Heart right ventricle (tissue), 16 donors: ENCODE measurements at regions of chrX and their contacts with region 1.

Region 1: DNA sequence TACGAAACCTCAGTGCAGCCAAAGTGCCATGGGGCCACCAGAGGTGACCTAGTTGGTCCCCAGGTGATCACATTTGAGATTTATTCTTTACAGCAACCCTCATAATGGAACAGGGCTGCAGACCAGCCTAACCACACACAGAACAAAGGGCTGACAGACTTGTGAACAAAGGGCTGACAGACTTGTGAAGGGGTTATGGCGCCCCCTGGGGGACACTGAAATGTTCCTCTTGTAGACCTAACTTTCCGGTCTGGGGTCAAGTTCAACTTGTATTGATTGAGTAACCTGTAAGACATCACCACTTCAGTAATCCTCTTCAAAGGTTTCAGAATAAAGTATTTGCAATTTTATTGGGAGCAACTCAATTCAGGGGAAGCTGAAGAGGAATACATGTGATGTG is 175.9 kb upstream of the RPS6KA3 start:
- DNase-seq: peak; percentile 63 to 75
- ATAC-seq: peak; percentile 56 to 83 (median 75)
- H3K4me3 ChIP-seq: no peak overlapping the region
- H3K27ac ChIP-seq: no peak overlapping the region
- H3K4me1 ChIP-seq: peaks cover 0 to 6% (median 0%) of the 10 kb centered on the region in 9 donors
- H3K27me3 ChIP-seq: peaks cover 0 to 8% (median 0%) of the 10 kb centered on the region in 7 donors
- CTCF ChIP-seq: peak; percentile 14 to 70 (median 66)

Region 2: DNA sequence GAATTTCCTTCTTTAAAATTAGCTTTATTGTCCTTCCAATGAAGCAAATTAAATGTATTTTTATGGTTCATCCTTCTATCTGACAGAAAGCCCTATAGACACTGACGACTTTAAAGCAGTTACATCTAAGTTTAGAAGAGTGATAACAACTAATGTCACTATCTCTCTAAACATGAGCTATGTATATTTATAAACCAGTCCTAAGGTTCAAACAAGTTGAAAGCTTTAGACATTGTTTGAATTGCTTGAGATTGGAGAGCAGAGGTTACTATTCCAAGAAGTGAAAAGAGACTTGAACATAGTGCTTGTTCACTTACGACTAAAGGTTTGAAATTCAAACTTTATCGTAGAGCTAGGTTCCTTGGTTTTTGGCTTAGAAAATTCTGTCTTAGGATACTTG is 270.7 kb before region 1 on chrX:
- intact Hi-C with region 1: loop called in 1 of 10 experiments (anchors 10 kb)
- DNase-seq: no peak
- ATAC-seq: peak in 1 of 8 donors; percentile 62
- H3K4me3 ChIP-seq: no peak overlapping the region
- H3K27ac ChIP-seq: peak overlapping the region in 4 of 10 donors; percentile 10 to 58 (median 28)
- H3K4me1 ChIP-seq: peaks cover 0 to 4% (median 0%) of the 10 kb centered on the region in 9 donors
- H3K27me3 ChIP-seq: peaks cover 0 to 62% (median 0%) of the 10 kb centered on the region in 7 donors
- CTCF ChIP-seq: no peak

Region 3: DNA sequence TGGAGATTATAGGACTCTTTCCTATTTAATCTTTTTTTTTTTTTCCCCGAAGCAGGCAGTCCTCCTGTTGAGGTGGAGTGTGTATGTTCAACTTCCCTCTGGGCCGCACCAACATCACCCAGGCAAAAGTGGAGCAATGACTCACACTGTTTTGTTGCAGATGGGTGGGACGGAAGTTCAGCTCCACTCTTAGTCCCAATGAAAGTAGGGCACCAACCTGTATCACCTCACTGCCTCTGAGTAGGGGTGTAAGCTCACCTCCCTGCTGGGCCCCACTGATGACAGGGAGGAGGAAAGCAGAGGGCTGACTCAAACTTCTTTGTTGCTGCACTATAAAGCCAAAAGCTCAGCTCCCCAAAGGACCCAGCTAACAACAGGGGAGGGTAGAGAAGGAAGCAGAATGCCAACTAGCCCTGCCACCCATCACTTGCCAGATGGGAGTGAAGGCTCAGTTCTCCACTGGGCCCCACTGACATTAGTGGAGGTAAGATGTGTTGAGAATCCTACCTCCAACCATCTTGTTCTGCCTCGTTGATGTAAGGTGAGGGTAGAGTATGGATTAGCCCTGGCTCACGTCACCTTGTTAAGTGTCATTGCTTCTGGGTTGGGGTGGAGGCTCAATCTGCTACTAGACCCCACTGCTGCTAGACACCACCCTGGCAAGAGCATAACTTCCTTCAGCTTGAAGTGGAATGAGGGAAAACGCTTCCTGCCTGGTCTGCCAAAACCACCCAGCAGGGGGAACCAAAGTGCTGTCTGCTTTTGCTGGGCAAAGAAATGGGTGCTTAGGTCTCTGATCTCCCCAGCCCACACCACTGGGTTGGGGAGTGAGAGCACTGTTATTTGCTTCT is 190.0 kb before region 1 on chrX:
- intact Hi-C with region 1: loop called in 8 of 10 experiments (anchors 2 to 10 kb)
- DNase-seq: peak; percentile 30 to 47
- ATAC-seq: peak in 6 of 8 donors; percentile 29 to 71 (median 48)
- H3K4me3 ChIP-seq: no peak overlapping the region
- H3K27ac ChIP-seq: no peak overlapping the region
- H3K4me1 ChIP-seq: peaks cover 0 to 15% (median 0%) of the 10 kb centered on the region in 9 donors
- H3K27me3 ChIP-seq: no peaks in the 10 kb centered on the region
- CTCF ChIP-seq: peak in 8 of 9 donors; percentile 23 to 68 (median 52)

Region 4: DNA sequence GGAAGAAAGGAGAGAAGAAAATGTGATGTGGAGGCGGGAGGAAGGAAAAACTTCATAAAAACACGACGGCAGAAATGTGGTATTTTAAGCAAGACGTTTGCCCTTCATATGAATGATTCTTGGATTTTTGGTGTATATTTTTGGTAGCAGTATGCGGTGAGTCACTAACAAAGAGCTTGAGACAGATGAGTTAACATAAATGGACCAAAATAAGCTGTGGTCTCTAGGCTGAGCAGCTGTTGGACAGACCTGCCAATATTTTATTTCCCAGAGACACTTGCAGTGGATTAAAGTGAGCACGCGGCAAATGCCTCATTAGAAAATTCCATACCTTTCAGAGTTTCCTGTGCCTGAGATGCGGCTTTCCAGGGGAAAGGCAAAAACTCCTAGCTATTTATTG is 132.8 kb before region 1 on chrX:
- intact Hi-C with region 1: no loop called
- DNase-seq: no peak
- ATAC-seq: no peak
- H3K4me3 ChIP-seq: no peak overlapping the region
- H3K27ac ChIP-seq: no peak overlapping the region
- H3K4me1 ChIP-seq: no peaks in the 10 kb centered on the region
- H3K27me3 ChIP-seq: no peaks in the 10 kb centered on the region
- CTCF ChIP-seq: no peak

Region 5: DNA sequence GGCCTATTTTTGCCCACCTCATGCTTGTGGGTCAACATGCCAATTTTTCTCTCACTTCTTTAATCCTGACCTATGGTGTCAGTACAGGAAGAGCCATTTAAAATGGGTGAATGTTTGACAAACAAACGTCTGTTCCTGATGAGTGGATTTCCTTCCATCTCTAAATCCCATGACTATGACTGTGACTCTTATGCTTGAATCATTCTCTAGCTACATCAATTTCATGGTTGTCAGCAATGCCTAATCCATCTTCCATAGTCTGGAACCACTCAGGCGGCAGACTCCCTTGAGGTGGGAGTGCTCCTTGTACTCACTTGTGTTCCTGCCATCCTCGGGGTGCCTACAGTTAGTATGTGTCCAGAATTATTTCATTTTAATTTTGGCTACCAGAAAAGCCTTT is 19.0 kb after region 1 on chrX:
- intact Hi-C with region 1: no loop called
- DNase-seq: no peak
- ATAC-seq: no peak
- H3K4me3 ChIP-seq: no peak overlapping the region
- H3K27ac ChIP-seq: no peak overlapping the region
- H3K4me1 ChIP-seq: no peaks in the 10 kb centered on the region
- H3K27me3 ChIP-seq: peaks cover 0 to 29% (median 0%) of the 10 kb centered on the region in 7 donors
- CTCF ChIP-seq: no peak

Region 6: DNA sequence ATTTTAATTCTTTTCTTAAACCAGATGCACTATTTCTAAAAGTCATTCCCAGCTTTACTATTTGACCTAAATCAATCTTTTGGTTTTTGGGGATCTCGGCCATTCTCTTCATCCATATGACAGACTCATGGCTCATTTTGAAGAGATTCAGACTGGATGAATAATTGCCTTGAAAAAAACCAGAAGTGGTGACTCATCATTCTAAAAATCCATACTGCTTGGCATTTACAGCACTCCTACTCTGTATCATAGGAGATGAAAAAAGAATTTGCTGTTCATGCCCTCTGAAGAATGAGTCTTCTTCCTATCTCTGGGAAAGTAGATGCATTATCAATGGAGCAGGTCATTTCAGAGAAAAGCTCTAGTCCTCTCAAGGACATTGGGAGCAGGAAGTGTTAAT is 44.6 kb after region 1 on chrX:
- intact Hi-C with region 1: no loop called
- DNase-seq: no peak
- ATAC-seq: no peak
- H3K4me3 ChIP-seq: no peak overlapping the region
- H3K27ac ChIP-seq: no peak overlapping the region
- H3K4me1 ChIP-seq: no peaks in the 10 kb centered on the region
- H3K27me3 ChIP-seq: peaks cover 0 to 15% (median 0%) of the 10 kb centered on the region in 7 donors
- CTCF ChIP-seq: no peak